ENCODE measurements at regions of chr9 and their contacts with region 1.

Region 1: GRCh38 chr9:133538851-133539833 is 4.6 kb downstream of the ADAMTSL2 start:
- DNase-seq: peak; percentile 72 to 78
- ATAC-seq: peak; percentile 61 to 88 (median 76)
- H3K4me3 ChIP-seq: peak overlapping the region in 9 of 10 donors; percentile 1 to 51 (median 36)
- H3K27ac ChIP-seq: peak overlapping the region; percentile 1 to 85 (median 58)
- H3K4me1 ChIP-seq: peaks cover 18 to 63% (median 46%) of the 10 kb centered on the region in 9 donors
- H3K27me3 ChIP-seq: peaks cover 0 to 18% (median 0%) of the 10 kb centered on the region in 7 donors
- CTCF ChIP-seq: no peak

Region 2: GRCh38 chr9:133558191-133559126 is 19.3 kb after region 1 on chr9:
- intact Hi-C with region 1: loop called in 1 of 10 experiments (anchors 2 kb)
- DNase-seq: peak; percentile 59 to 68
- ATAC-seq: peak; percentile 51 to 74 (median 64)
- H3K4me3 ChIP-seq: peak overlapping the region in 4 of 10 donors; percentile 24 to 29 (median 28)
- H3K27ac ChIP-seq: peak overlapping the region; percentile 59 to 88 (median 78)
- H3K4me1 ChIP-seq: peaks cover 34 to 66% (median 49%) of the 10 kb centered on the region in 9 donors
- H3K27me3 ChIP-seq: no peaks in the 10 kb centered on the region
- CTCF ChIP-seq: no peak

Region 3: GRCh38 chr9:133597316-133597957 is 58.3 kb after region 1 on chr9:
- intact Hi-C with region 1: no loop called
- DNase-seq: no peak
- ATAC-seq: no peak
- H3K4me3 ChIP-seq: no peak overlapping the region
- H3K27ac ChIP-seq: no peak overlapping the region
- H3K4me1 ChIP-seq: no peaks in the 10 kb centered on the region
- H3K27me3 ChIP-seq: peaks cover 0 to 21% (median 8%) of the 10 kb centered on the region in 7 donors
- CTCF ChIP-seq: no peak